Motor neuron (in vitro differentiated cells): ENCODE measurements at regions of chr22 and their contacts with region 1.

Region 1: GRCh38 chr22:30079952-30080533 is at the start of gene HORMAD2:
- ATAC-seq: peak; percentile 59 to 100 (median 97)
- H3K4me3 ChIP-seq: peak within 1 kb of the TSS in 1 of 5 donors; percentile 11
- H3K27ac ChIP-seq: no peak within 1 kb of the TSS
- H3K4me1 ChIP-seq: peaks cover 0 to 3% of the 10 kb centered on the region in 2 donors
- total RNA-seq, gene HORMAD2: 0.11 to 0.23 (median 0.13) TPM in 3 of 8 experiments, not detected in the others

Region 2: GRCh38 chr22:29387921-29388758 is 691.9 kb before region 1 on chr22 and contains the start of gene AP1B1:
- in situ Hi-C with region 1: loop called in 1 of 9 experiments (anchors 25 kb)
- ATAC-seq: peak; percentile 95 to 99 (median 97)
- H3K4me3 ChIP-seq: peak within 1 kb of the TSS; percentile 58 to 85 (median 72)
- H3K27ac ChIP-seq: peak within 1 kb of the TSS; percentile 40 to 71
- H3K4me1 ChIP-seq: peaks cover 12% of the 10 kb centered on the region in 2 donors
- total RNA-seq, gene AP1B1: 31.3 to 60.4 (median 45.4) TPM

Region 3: GRCh38 chr22:29689880-29690213 is 390.2 kb before region 1 on chr22:
- in situ Hi-C with region 1: loop called in 3 of 9 experiments (anchors 25 kb)
- ATAC-seq: peak; percentile 37 to 90 (median 86)
- H3K4me3 ChIP-seq: no peak overlapping the region
- H3K27ac ChIP-seq: no peak overlapping the region
- H3K4me1 ChIP-seq: peaks cover 14 to 22% of the 10 kb centered on the region in 2 donors

Region 4: GRCh38 chr22:30212363-30212995 is 132.4 kb after region 1 on chr22:
- in situ Hi-C with region 1: no loop called
- ATAC-seq: peak in 7 of 8 experiments; percentile 13 to 66 (median 42)
- H3K4me3 ChIP-seq: no peak overlapping the region
- H3K27ac ChIP-seq: no peak overlapping the region
- H3K4me1 ChIP-seq: peaks cover 16 to 18% of the 10 kb centered on the region in 2 donors